Activated CD4-positive, alpha-beta memory T cell treated with anti-CD3 and anti-CD28 coated beads, Interleukin-2, amount 10 ng/mL, durations not matched to agents 7 days and 5 days (primary cell): ENCODE measurements at regions of chr6 and their contacts with region 1.

Region 1: DNA sequence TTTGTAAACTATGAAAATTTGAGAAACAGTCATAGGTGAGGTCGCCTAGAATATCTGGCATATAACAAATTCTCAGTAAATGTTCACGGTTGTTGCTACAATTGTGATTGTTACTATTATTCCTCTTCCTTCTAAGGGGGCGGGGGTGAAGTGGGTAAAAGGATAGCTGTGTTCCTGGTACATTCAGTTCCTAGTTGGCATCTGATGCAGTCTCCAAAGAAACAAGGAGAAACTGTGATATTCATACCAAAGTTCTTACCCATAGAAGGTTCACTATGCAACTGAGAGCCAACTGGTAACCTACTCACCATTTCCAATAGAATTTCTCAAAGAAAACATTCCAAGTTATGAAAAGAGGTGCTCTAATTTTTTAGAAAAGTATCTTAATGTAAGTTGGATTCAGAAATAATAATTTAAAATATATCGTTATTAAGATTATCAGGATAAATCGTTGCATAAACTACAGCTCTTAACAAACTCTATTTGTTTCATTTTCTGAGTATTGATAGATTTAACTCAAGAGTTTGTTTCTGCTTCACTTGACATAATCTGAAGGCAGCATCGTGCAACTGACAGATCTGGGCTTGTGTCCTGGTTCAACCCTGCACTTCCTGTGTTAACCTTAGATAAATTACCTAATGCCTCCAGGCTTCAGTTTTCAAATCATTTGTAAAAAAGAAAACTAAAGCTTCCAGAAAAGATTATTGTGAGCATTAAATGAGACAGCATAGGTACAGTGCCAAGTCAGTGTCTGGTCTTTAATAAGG is 13.3 kb upstream of the MAP7 start:
- DNase-seq: no peak
- H3K4me3 Mint-ChIP-seq: no peak overlapping the region
- H3K27ac Mint-ChIP-seq: peak overlapping the region; percentile 12
- H3K4me1 Mint-ChIP-seq: peaks cover 17% of the 10 kb centered on the region
- H3K27me3 Mint-ChIP-seq: no peaks in the 10 kb centered on the region

Region 2: GRCh38 chr6:136510782-136511181 is 52.8 kb before region 1 on chr6:
- CTCF ChIA-PET with region 1: no interaction called
- POLR2A ChIA-PET with region 1: no interaction called
- DNase-seq: no peak
- H3K4me3 Mint-ChIP-seq: no peak overlapping the region
- H3K27ac Mint-ChIP-seq: no peak overlapping the region
- H3K4me1 Mint-ChIP-seq: peaks cover 10% of the 10 kb centered on the region
- H3K27me3 Mint-ChIP-seq: peaks cover 2% of the 10 kb centered on the region

Region 3: DNA sequence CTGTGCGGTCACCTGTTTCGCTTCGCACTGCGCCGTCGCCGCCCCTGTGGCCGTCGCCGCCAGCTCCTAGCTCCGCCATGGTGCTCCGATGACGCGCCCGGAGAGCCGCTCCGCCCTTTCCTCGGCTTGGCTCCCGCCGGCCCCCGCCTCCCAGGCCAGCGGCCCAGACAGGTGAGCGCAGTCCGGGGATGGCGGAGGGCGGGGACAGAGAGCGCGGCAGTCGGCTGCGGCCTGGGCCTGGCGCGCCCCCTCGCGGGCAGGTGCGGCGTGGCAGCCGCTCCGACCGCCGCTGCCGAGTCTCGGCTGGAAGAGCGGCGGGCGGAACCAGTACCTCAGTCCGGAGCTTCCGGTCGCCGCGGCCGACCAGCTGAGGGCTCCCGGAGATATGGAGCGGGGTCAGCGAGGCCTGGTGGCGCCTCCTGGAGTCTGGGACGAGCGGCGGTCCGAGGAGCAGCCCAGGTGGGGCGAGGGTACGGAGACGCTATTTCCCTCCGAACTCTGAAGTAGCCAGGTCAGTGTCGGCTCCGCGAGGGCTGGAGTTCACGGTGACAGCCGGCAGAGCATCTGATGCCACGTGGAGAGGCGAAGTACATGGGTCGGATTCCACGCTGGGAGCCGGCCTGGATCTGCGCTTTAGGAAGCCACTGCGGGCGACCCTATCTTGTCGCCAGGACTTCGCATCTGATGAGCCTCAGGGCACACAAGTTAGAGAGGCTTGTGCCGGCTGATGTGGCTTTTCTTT is 13.1 kb before region 1 on chr6 and contains the start of gene MAP7:
- CTCF ChIA-PET with region 1: interaction called, 10 read pairs
- POLR2A ChIA-PET with region 1: interaction called, 3 read pairs
- DNase-seq: peak; percentile 60
- H3K4me3 Mint-ChIP-seq: peak within 1 kb of the TSS; percentile 60
- H3K27ac Mint-ChIP-seq: no peak within 1 kb of the TSS
- H3K4me1 Mint-ChIP-seq: peaks cover 12% of the 10 kb centered on the region
- H3K27me3 Mint-ChIP-seq: peaks cover 48% of the 10 kb centered on the region
- total RNA-seq, gene MAP7: 1.4 to 1.8 TPM